Right ventricle myocardium superior (tissue), 1 donor: ENCODE measurements at regions of chr1 and their contacts with region 1.

Region 1: GRCh38 chr1:180116964-180117763 is 37.5 kb upstream of the QSOX1 start:
- DNase-seq: no peak
- ATAC-seq: peak; percentile 80

Region 2: GRCh38 chr1:180042988-180043622 is 74.1 kb before region 1 on chr1:
- intact Hi-C with region 1: no loop called
- DNase-seq: no peak
- ATAC-seq: no peak

Region 3: GRCh38 chr1:180168786-180169639 is 51.8 kb after region 1 on chr1:
- intact Hi-C with region 1: loop called (anchors 5 kb)
- DNase-seq: no peak
- ATAC-seq: peak; percentile 38